H1 (cell line): ENCODE measurements at regions of chr2 and their contacts with region 1.

Region 1: DNA sequence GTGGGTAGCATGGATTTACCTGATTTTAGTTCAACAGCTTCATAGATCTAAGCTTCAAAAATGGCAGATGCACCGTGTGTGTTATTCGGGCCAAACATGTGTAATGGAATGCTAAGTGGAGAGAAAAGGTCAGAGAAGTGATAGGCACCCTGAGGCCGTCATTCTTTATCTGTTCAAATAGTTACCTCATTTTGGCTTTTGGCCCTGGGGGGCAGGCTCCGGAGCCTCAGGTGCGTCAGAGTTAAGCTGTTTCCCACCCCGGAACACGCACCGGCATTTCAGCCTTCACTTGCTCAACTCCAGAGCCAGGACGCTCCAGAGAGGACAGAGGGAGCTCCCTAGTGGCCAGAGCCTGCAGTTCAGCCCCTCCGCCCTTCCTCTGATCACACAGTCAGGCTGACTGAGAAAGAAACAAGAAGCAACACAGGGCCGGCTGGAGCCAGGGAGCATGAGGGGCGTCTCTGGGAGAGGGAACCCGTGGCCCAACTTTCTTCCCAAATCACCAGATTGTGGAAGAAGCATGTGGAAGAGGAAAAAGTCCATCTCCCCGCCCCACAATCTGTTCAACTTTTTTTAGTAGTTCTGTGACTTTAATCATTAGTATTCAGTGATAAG is 135.2 kb upstream of the EPC2 start:
- DNase-seq: peak; percentile 71 to 91
- H3K4me3 ChIP-seq: no peak overlapping the region
- H3K27ac ChIP-seq: no peak overlapping the region
- H3K4me1 ChIP-seq: peaks cover 0 to 2% (median 0%) of the 10 kb centered on the region in 4 experiments; a peak in 1 of 7 replicates
- H3K27me3 ChIP-seq: no peaks in the 10 kb centered on the region
- CTCF ChIP-seq: peak; percentile 91 to 96 (median 93)
- EP300 ChIP-seq: peak in 1 of 2 experiments; percentile 8; a peak in 1 of 3 replicates
- POLR2A ChIP-seq: no peak
- RAD21 ChIP-seq: peak; percentile 98 to 99

Region 2: DNA sequence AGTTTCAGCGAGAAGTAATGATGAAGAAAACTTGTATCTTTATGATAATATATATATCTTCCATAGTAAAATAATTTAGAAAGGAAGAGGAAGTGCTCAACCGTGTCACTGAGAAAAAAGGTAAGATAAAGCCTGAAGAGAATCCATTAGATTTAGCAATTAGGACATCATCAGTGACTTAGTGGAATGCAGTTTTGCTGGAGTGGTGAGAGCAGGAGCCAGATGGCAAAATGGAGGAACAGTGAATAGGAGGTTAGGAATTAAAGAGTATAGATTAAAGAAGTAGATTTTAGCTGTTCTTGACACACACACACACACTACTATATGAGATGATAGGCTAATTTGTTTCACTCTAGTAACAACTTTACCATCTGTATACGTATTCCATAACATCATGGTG is 22.0 kb before region 1 on chr2:
- CTCF ChIA-PET with region 1: interaction called, 13 read pairs
- POLR2A ChIA-PET with region 1: interaction called, 4 read pairs
- DNase-seq: no peak
- H3K4me3 ChIP-seq: no peak overlapping the region
- H3K27ac ChIP-seq: no peak overlapping the region
- H3K4me1 ChIP-seq: peaks cover 0 to 2% (median 1%) of the 10 kb centered on the region in 4 experiments; a peak in 2 of 7 replicates
- H3K27me3 ChIP-seq: no peaks in the 10 kb centered on the region
- CTCF ChIP-seq: no peak
- EP300 ChIP-seq: no peak
- POLR2A ChIP-seq: no peak
- RAD21 ChIP-seq: no peak

Region 3: GRCh38 chr2:148622366-148622765 is 113.0 kb after region 1 on chr2:
- CTCF ChIA-PET with region 1: no interaction called
- POLR2A ChIA-PET with region 1: no interaction called
- DNase-seq: no peak
- H3K4me3 ChIP-seq: no peak overlapping the region
- H3K27ac ChIP-seq: no peak overlapping the region
- H3K4me1 ChIP-seq: no peaks in the 10 kb centered on the region
- H3K27me3 ChIP-seq: no peaks in the 10 kb centered on the region
- CTCF ChIP-seq: no peak
- EP300 ChIP-seq: no peak
- POLR2A ChIP-seq: no peak
- RAD21 ChIP-seq: no peak